HepG2 (cell line): ENCODE measurements at regions of chr12 and their contacts with region 1.

Region 1: DNA sequence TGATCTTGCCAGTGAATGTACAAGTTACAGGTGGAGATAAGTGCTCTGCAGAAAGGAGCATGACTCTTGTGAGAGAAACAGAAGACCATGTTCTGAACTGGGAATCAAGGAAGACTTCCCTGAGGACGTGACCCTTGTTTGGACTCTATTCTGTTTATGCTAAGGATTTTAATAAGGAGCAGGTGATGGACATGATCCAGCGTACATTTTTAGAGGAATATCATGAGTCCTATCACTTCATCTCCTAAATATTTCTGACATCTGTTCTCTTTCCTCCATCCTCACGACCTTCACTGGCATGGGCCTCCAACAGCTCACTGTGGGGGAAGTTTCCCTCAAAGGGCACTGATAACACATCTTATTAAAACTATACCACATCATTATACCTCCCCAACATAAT is 7.9 kb upstream of the SLC38A1 start:
- DNase-seq: no peak
- ATAC-seq: no peak
- H3K4me3 ChIP-seq: no peak overlapping the region
- H3K27ac ChIP-seq: no peak overlapping the region
- H3K4me1 ChIP-seq: no peaks in the 10 kb centered on the region
- H3K27me3 ChIP-seq: no peaks in the 10 kb centered on the region; a peak in 1 of 5 replicates
- CTCF ChIP-seq: no peak
- EP300 ChIP-seq: no peak
- POLR2A ChIP-seq: no peak
- RAD21 ChIP-seq: no peak

Region 2: GRCh38 chr12:46160101-46160980 is 116.4 kb before region 1 on chr12:
- CTCF ChIA-PET with region 1: no interaction called
- POLR2A ChIA-PET with region 1: no interaction called
- in situ Hi-C with region 1: no loop called
- intact Hi-C with region 1: no loop called
- DNase-seq: no peak
- ATAC-seq: no peak
- H3K4me3 ChIP-seq: no peak overlapping the region
- H3K27ac ChIP-seq: no peak overlapping the region
- H3K4me1 ChIP-seq: no peaks in the 10 kb centered on the region
- H3K27me3 ChIP-seq: peaks cover 0 to 4% of the 10 kb centered on the region in 2 experiments; a peak in 1 of 5 replicates
- CTCF ChIP-seq: no peak
- EP300 ChIP-seq: no peak
- POLR2A ChIP-seq: no peak
- RAD21 ChIP-seq: no peak

Region 3: DNA sequence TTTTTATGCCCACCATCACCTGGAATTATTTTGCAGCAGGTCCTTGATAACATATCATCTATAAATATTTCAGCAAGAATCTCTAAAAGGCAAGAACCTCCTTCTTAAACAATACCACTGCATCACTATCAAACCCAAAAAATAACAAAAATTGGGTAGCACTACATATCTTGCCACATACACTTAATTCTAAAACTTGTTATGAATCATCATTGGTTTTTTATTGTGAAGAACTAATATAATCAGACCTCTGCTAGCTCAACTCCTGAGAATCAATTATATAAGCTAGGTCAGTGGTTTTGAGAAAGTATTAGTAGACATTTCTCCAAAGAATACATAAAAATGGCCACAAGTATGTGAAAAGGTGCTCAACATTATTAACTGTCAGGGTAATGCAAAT is 31.8 kb before region 1 on chr12:
- CTCF ChIA-PET with region 1: no interaction called
- POLR2A ChIA-PET with region 1: no interaction called
- in situ Hi-C with region 1: no loop called
- intact Hi-C with region 1: loop called (anchors 1 kb)
- DNase-seq: no peak
- ATAC-seq: no peak
- H3K4me3 ChIP-seq: no peak overlapping the region
- H3K27ac ChIP-seq: no peak overlapping the region
- H3K4me1 ChIP-seq: no peaks in the 10 kb centered on the region
- H3K27me3 ChIP-seq: no peaks in the 10 kb centered on the region
- CTCF ChIP-seq: no peak
- EP300 ChIP-seq: no peak
- POLR2A ChIP-seq: no peak
- RAD21 ChIP-seq: no peak

Region 4: DNA sequence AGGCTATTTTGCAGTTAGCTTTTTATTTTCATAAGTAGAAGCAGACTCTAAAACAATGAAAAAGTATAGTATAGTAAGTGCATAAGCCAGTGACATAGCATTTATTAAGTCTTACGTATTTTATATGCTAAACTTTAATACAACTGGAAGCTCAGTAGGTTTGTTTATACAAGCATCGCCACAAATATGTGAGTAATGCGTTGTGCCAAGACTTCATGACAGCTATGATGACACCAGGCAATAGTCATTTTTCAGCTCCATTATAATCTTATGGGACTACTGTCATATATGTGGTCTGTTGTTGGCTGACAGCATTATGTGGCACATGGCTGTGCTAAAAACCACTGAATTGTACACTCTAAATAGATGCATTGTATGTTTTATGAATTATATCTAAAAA is 55.5 kb after region 1 on chr12:
- CTCF ChIA-PET with region 1: no interaction called
- POLR2A ChIA-PET with region 1: no interaction called
- in situ Hi-C with region 1: no loop called
- intact Hi-C with region 1: no loop called
- DNase-seq: peak; percentile 9
- ATAC-seq: no peak
- H3K4me3 ChIP-seq: no peak overlapping the region
- H3K27ac ChIP-seq: no peak overlapping the region
- H3K4me1 ChIP-seq: no peaks in the 10 kb centered on the region
- H3K27me3 ChIP-seq: no peaks in the 10 kb centered on the region
- CTCF ChIP-seq: no peak
- EP300 ChIP-seq: no peak
- POLR2A ChIP-seq: no peak
- RAD21 ChIP-seq: no peak

Region 5: DNA sequence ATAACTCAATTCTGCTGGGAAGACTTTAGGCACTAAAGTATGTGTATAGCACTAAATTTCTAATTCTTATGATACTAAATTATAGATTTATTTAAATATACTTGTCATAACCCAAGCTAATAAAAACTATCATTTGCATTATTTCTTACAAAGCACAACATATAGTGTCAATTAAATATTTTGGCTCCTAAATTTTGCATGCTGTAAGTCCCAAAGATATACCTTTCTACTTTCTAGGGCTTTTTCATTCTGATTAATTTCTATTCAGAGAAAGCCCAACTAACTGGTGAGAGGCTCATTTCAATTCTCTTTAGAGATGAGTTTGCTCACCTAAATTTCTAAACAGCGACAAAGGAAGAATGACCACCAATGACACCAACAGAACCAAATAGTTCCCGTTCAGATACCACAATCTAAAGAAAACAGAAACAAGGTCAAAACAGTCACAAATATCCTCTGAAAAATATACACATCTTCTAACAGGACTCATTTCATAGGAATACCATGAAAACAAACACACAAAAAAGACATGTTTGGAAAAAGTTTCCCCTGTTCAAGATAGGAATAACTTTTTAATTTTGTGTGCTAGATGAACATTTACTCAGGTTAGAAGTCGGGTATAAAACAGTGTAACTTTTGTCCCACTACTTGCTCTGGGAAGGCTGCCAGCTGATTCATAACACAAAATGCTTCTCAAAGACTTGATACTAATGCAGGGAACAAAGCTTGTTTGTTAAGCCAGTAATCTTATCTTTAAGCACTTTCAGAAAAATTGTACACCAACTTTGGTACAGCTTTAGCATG is 88.2 kb after region 1 on chr12:
- CTCF ChIA-PET with region 1: no interaction called
- POLR2A ChIA-PET with region 1: no interaction called
- in situ Hi-C with region 1: no loop called
- intact Hi-C with region 1: no loop called
- DNase-seq: peak; percentile 78
- ATAC-seq: no peak; the same call in 2 of the 3 replicates
- H3K4me3 ChIP-seq: peak overlapping the region; percentile 5 to 94 (median 84); a peak in 4 of 6 replicates
- H3K27ac ChIP-seq: peak overlapping the region; percentile 97
- H3K4me1 ChIP-seq: peaks cover 67% of the 10 kb centered on the region
- H3K27me3 ChIP-seq: no peaks in the 10 kb centered on the region
- CTCF ChIP-seq: no peak
- EP300 ChIP-seq: 0 out of 4 replicates have a peak, but pooled peaks of 1 of the 2 experiments have one; percentile 14
- POLR2A ChIP-seq: peak; percentile 19 to 35; a peak in 2 of 4 replicates
- RAD21 ChIP-seq: 0 out of 2 replicates have a peak, but pooled peaks have one; percentile 9

Region 6: DNA sequence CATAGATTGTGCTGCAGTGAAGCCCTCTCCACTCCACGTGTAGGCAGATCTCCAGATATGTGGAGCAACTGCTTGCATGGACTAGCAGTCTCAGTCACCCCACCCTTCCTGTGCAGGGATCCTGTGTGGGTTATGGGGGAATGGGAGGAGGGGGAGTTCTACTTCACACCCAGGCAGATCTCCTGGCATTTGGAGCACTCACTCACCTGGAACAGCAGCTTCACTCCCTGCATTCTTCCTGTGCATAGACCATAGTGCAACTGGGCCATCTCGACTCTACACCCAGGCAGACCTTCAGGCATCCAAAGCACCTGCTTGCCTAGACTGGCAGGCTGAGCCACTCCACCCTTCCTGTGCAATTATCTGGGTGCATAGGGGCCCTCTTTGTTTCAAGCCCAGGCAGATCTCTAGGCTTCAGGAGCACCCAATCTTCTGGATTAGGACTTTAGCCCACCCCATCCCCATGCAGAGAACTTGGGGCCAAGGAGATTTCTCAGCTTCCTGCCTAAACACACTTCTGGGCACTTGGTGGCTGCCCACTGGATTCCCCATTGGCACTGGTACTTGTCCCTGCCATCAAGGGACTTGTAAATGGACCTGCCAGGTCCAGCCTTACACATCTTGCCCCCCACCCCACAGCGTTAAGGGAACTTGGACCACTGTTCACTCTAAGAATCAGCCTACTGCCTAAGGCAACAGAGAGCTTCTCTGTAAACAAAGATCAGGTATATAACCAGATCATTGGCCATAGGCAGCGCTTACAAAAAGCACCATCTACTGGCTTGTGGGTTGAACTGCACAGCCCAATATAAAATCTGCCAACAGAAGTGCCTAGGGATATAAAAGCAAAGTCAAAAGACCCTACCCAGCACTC is 706.9 kb after region 1 on chr12:
- CTCF ChIA-PET with region 1: no interaction called
- POLR2A ChIA-PET with region 1: no interaction called
- in situ Hi-C with region 1: no loop called
- intact Hi-C with region 1: no loop called
- DNase-seq: peak; percentile 51
- ATAC-seq: peak; percentile 93
- H3K4me3 ChIP-seq: no peak overlapping the region
- H3K27ac ChIP-seq: no peak overlapping the region
- H3K4me1 ChIP-seq: peaks cover 10% of the 10 kb centered on the region; the same call in 1 of the 2 replicates
- H3K27me3 ChIP-seq: 0 out of 5 replicates have a peak, but pooled peaks cover 0 to 3% of the 10 kb centered on the region in 2 experiments
- CTCF ChIP-seq: peak; percentile 84
- EP300 ChIP-seq: no peak
- POLR2A ChIP-seq: no peak
- RAD21 ChIP-seq: peak; percentile 77